Lower leg skin (tissue), 4 donors: ENCODE measurements at regions of chr16 and their contacts with region 1.

Region 1: GRCh38 chr16:8644211-8645140 is 23.0 kb downstream of the METTL22 start:
- DNase-seq: no peak
- H3K4me3 ChIP-seq: no peak overlapping the region
- CTCF ChIP-seq: no peak
- POLR2A ChIP-seq: no peak

Region 2: DNA sequence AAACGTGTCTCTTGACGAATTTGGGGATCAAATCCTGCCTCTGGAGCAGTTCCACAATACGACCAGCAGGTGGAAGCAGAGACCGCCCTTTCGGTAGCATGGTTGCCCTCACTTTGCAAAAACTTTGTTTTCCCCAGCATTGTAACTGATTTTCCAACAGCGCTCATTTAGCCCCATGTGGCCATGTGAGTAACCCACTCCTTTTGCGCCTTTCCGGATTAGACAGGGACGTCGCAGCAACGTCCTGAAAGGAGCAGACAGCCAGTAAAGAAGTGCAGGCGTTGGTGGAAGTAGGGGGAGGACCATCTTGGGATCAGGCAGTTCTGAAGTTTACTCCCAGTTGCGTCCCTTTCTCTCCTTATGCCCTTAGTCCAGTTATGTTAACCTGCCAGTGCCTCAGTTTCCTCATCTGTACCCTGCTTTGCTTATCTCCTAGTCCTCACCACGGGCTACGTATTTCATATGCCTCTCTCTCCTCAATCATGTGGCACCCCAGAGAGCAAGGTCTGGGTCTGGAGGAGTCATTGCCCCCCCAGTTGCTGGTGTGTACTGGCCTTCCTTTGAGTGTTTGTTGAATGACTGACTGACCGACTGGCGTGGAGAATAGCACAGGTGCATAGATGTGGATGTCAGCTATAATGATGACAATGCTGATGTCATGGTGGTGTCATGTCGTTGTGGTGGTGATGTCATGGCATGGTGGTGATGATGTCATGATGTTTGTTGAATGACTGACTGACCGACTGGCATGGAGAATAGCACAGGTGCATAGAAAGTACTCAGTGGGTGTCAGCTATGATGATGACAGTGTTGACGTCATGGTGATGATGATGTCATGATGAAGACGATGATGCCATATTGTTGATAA is 76.5 kb before region 1 on chr16:
- intact Hi-C with region 1: loop called (anchors 10 kb)
- DNase-seq: peak; percentile 68 to 91
- H3K4me3 ChIP-seq: no peak overlapping the region
- CTCF ChIP-seq: peak in 1 of 3 donors; percentile 78
- POLR2A ChIP-seq: no peak